Cardiac septum (tissue), 1 donor: ENCODE measurements at regions of chr14 and their contacts with region 1.

Region 1: DNA sequence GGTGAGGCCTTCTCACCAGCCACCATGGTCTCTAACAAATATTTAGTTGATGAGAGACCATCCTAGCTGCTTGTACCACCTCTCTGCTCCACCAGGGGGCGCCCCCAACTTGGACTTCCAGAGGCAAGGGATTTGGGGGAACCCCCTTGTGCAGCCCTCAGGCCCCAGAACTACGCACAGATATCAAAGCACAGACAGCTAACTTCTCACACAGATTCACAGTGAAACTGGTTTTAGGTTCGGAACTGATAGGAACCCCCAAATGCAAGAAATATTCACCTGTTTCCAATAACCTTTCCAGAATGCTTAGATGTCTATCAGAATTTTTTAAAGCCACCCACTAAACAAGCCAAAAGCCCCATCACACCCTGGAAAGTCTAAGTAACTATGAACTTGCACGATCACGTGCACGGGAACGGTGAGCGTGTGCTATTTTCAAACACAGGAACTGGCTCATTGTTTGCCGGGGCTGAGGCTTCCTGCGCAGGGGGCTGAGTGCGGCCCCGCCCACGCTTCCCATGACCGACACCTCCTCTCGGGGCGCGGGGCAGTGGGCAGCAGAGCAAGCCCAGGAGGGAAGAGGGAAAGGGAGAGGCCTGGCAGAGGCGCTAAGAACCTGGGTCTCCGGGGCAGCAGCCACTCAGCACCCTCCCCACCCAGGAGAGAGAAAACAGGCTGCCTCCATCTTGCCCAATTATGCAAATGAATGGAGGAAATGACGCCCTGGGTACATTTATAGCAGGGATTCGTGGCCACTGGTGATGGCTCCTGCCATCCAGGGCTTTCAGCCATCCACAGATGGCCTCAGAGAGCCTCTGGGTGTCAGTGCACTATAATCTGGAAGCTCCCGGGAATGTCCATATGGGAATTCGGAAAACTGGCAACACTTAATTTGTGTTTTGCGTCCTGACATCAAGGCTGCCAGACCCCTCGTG is 79.4 kb upstream of the GPR68 start:
- DNase-seq: peak; percentile 93

Region 2: DNA sequence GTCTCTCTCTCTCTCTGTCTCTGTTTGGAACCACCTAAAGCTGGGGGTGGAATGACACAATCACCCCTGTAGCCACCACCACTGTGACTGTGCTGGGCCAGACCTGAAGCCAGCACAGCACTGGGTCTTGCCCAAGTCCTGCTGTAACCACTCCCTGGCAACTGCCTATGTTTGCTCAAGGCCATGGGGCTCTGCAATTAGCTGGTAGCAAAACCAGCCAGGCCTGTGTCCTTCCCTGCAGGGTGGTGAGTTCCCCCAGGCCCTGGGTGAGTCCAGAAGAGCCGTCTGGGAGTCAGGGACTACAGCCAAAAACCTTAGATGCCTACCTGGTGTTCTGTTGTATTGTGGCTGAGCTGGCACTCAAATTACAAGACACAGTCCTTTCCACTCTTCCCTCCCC is 159.3 kb before region 1 on chr14:
- intact Hi-C with region 1: no loop called
- DNase-seq: no peak

Region 3: GRCh38 chr14:91292491-91292890 is 31.4 kb before region 1 on chr14:
- intact Hi-C with region 1: no loop called
- DNase-seq: no peak

Region 4: GRCh38 chr14:91350813-91351511 is 27.0 kb after region 1 on chr14:
- intact Hi-C with region 1: no loop called
- DNase-seq: no peak

Region 5: GRCh38 chr14:91373591-91374254 is 49.8 kb after region 1 on chr14:
- intact Hi-C with region 1: loop called (anchors 5 kb)
- DNase-seq: no peak

Region 6: DNA sequence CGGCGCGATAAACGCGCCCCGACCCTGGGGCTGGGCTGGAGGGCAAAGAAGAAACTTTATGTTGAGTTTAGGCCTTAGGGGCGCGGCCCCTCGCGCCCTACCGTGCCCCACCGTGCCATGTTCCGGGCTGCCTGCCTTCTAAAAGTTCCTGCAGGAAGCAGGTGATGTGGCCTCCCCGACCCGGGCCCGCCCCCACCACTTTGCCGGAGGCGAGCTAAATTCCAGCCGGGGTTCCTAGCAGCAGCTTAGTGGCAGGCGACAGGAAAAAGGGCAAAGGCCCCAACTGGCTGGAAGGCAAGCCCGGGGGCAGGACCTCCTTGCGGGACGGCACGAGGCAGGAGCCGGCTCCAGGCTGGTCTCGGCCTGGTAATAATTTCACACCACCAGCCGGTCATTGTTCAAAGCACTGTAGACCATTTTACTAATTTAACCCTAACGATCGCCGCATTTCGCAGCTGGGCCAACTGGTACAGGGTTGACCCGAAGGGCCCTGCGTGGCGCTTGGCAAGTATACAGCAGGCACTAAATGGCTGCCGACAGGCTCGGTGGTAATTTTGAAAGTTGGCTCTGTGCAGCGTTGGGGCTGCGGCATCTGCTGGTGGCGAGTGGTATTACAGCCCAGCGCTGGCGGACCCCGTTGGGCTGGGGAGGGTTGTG is 94.6 kb after region 1 on chr14:
- intact Hi-C with region 1: loop called (anchors 1 kb)
- DNase-seq: peak; percentile 89